ENCODE measurements at regions of chr18 and their contacts with region 1.

Region 1: DNA sequence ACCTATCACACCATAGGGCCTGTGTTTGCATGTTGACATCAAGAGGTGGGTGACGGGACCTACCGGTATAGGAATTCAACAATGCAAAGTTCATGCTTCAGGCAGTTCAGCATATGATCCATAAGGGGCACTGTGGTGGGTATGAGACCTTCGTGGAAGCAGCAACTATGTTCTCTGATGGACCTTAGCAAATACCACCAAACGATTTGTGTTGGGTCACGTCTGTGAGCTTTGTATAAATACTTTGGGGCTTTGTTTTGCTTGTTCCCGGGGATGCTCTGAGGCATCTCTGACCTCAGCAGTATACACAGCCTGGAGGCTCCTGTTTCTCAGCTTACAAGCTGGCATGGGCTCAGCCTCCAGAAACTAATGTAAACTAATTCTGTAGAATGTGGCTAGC is 111.7 kb downstream of the DTNA start:
- DNase-seq: no peak
- H3K4me3 ChIP-seq: no peak overlapping the region
- H3K27ac ChIP-seq: no peak overlapping the region
- H3K4me1 ChIP-seq: peaks cover 0 to 9% (median 0%) of the 10 kb centered on the region in 4 donors
- H3K27me3 ChIP-seq: no peaks in the 10 kb centered on the region
- CTCF ChIP-seq: no peak
- EP300 ChIP-seq: no peak
- POLR2A ChIP-seq: no peak

Region 2: DNA sequence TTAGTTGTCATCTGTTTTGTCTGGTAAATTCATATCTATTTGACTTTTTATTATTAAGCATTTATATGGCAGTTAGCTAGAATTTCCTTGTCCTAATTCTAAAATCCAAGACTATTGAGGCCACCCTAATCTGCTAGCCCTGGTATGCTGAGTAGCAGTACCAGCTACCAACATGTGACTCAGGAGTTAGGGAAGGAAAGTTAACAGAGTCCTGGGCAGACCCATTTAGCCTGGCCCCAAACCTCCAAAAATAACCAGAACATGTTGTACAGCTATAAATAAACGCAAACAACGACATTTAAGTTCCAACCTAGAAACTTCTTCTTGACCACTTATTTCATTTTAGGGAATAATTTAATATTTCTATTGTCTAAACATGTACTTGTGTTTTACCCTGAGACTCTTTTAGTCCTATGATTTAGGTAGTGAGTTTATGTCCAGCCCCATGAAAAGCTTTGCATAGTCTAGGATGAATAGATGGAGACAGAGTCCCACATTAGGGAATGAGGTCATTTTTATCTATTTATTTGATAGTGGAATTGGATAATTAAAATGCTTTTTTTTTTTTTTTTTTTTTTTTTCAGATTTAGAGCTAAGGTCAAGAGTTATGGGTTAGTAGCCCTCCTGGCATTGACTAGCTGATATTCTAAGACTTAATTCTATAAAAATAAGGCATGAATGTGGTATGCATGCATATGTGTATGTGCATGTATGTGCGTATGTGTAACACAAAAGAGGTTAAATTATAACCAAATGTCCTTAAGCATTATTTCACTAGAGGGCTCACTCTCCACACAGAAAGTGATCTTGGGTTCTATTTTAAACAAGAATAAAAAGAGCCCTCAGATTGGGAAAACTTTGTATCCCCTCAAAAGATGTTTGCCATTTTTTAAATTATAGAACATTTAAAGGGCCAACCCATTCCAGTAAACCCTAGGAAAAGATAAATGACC is 59.4 kb after region 1 on chr18:
- in situ Hi-C with region 1: no loop called
- intact Hi-C with region 1: loop called (anchors 10 kb)
- DNase-seq: no peak
- H3K4me3 ChIP-seq: no peak overlapping the region
- H3K27ac ChIP-seq: peak overlapping the region in 3 of 4 donors; percentile 20 to 45 (median 31)
- H3K4me1 ChIP-seq: peaks cover 3 to 5% (median 4%) of the 10 kb centered on the region in 4 donors
- H3K27me3 ChIP-seq: no peaks in the 10 kb centered on the region
- CTCF ChIP-seq: peak in 1 of 5 experiments; percentile 13
- EP300 ChIP-seq: no peak
- POLR2A ChIP-seq: no peak

Measured in transverse colon (tissue), 4 donors.